CD4-positive, alpha-beta T cell (primary cell): ENCODE measurements at regions of chr6 and their contacts with region 1.

Region 1: GRCh38 chr6:107957909-107958688 is at the start of gene SEC63:
- DNase-seq: peak; percentile 94 to 98 (median 97)
- ATAC-seq: peak; percentile 97
- H3K4me3 ChIP-seq: peak within 1 kb of the TSS; percentile 81
- H3K4me3 Mint-ChIP-seq: peak within 1 kb of the TSS; percentile 99
- H3K27ac ChIP-seq: peak within 1 kb of the TSS; percentile 46 to 61
- H3K27ac Mint-ChIP-seq: peak within 1 kb of the TSS; percentile 82
- H3K4me1 ChIP-seq: peaks cover 16% of the 10 kb centered on the region
- H3K4me1 Mint-ChIP-seq: peaks cover 32% of the 10 kb centered on the region
- H3K27me3 ChIP-seq: no peaks in the 10 kb centered on the region
- H3K27me3 Mint-ChIP-seq: no peaks in the 10 kb centered on the region
- CTCF ChIP-seq: no peak
- total RNA-seq, gene SEC63: 80.3 to 86.7 TPM

Region 2: GRCh38 chr6:107033126-107033525 is 925.0 kb before region 1 on chr6:
- CTCF ChIA-PET with region 1: no interaction called
- POLR2A ChIA-PET with region 1: no interaction called
- intact Hi-C with region 1: loop called in 1 of 2 experiments (anchors 5 kb)
- DNase-seq: no peak
- ATAC-seq: no peak
- H3K4me3 ChIP-seq: no peak overlapping the region
- H3K4me3 Mint-ChIP-seq: no peak overlapping the region
- H3K27ac ChIP-seq: no peak overlapping the region
- H3K27ac Mint-ChIP-seq: no peak overlapping the region
- H3K4me1 ChIP-seq: peaks cover 22% of the 10 kb centered on the region
- H3K4me1 Mint-ChIP-seq: peaks cover 45% of the 10 kb centered on the region
- H3K27me3 ChIP-seq: no peaks in the 10 kb centered on the region
- H3K27me3 Mint-ChIP-seq: no peaks in the 10 kb centered on the region
- CTCF ChIP-seq: no peak

Region 3: DNA sequence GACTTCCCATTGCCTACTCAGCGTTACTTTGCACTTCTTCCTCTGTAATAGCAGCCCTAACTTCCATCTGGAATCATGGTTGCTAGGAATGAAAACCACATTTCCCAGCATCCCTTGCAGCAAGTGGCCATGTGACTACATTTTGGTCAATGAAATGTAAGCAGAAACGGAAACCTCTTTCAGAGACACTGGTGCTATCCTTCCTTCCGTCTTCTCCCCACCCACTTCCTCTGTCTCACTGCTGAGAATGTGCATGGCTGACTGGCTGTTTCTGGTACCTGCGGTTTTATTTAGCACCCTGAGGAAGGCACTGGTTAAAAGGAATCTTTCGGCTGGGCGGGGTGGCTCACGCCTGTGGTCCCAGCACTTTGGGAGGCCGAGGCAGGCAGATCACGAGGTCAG is 241.4 kb before region 1 on chr6:
- CTCF ChIA-PET with region 1: no interaction called
- POLR2A ChIA-PET with region 1: interaction called, 3 read pairs
- intact Hi-C with region 1: loop called in 1 of 2 experiments (anchors 5 kb)
- DNase-seq: peak; percentile 49 to 95 (median 66)
- ATAC-seq: peak; percentile 91
- H3K4me3 ChIP-seq: no peak overlapping the region
- H3K4me3 Mint-ChIP-seq: peak overlapping the region; percentile 75
- H3K27ac ChIP-seq: peak overlapping the region in 1 of 2 donors; percentile 63
- H3K27ac Mint-ChIP-seq: peak overlapping the region; percentile 91
- H3K4me1 ChIP-seq: peaks cover 76% of the 10 kb centered on the region
- H3K4me1 Mint-ChIP-seq: peaks cover 77% of the 10 kb centered on the region
- H3K27me3 ChIP-seq: no peaks in the 10 kb centered on the region
- H3K27me3 Mint-ChIP-seq: no peaks in the 10 kb centered on the region
- CTCF ChIP-seq: no peak